CD4-positive, alpha-beta T cell (primary cell): ENCODE measurements at regions of chr1 and their contacts with region 1.

Region 1: DNA sequence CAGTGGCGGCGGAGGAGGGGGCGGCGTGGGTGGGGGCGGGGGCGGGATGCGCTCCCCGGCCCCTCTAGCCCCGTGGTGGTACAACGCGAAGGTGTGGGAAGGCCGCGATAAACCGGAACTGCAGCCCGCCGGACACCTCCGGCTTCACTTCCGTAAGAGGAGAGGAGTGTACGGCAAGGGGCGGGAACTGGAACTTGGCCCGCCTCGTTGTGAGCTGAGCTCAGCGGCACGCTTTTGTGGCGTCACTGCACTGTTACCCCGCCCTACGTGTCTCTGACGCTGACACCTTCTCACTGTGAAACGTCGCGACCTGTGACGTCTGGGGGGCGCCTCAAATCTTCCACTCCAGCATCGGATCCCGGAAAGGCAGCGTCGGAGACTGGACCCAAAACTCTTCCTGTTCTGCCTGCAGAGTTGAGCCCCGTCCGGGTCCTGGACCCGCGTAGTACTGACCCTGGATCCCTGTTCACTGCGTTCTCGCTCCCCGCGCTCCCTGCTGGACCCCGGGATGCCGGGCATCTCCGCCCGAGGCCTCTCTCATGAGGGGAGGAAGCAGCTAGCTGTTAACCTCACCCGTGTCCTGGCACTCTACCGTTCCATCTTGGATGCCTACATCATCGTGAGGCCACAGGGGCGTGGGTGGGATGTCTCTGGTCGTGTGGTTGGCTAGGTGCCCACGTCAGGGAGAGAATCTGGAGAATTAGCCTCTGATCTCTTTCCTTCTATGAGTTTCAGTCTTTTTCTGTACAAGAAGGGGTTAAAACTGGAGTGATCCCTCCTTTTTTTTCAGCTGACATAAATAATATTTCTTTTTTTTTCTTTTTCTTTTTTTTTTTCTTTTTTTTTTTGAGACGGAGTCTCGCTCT is at the start of gene ISG20L2:
- DNase-seq: peak; percentile 80 to 99 (median 90)
- ATAC-seq: peak; percentile 90
- H3K4me3 ChIP-seq: peak within 1 kb of the TSS; percentile 99
- H3K4me3 Mint-ChIP-seq: no peak within 1 kb of the TSS
- H3K27ac ChIP-seq: peak within 1 kb of the TSS; percentile 90 to 98
- H3K27ac Mint-ChIP-seq: peak within 1 kb of the TSS; percentile 98
- H3K4me1 ChIP-seq: peaks cover 48% of the 10 kb centered on the region
- H3K4me1 Mint-ChIP-seq: peaks cover 23% of the 10 kb centered on the region
- H3K27me3 ChIP-seq: no peaks in the 10 kb centered on the region
- H3K27me3 Mint-ChIP-seq: no peaks in the 10 kb centered on the region
- CTCF ChIP-seq: no peak
- total RNA-seq, gene ISG20L2: 44.2 to 50.9 TPM

Region 2: GRCh38 chr1:156659994-156660751 is 68.7 kb before region 1 on chr1:
- CTCF ChIA-PET with region 1: interaction called, 25 read pairs
- POLR2A ChIA-PET with region 1: interaction called, 6 read pairs
- intact Hi-C with region 1: loop called (anchors 1 to 2 kb)
- DNase-seq: peak; percentile 79 to 96 (median 88)
- ATAC-seq: peak; percentile 87
- H3K4me3 ChIP-seq: no peak overlapping the region
- H3K4me3 Mint-ChIP-seq: peak overlapping the region; percentile 54
- H3K27ac ChIP-seq: no peak overlapping the region
- H3K27ac Mint-ChIP-seq: peak overlapping the region; percentile 42
- H3K4me1 ChIP-seq: peaks cover 60% of the 10 kb centered on the region
- H3K4me1 Mint-ChIP-seq: peaks cover 60% of the 10 kb centered on the region
- H3K27me3 ChIP-seq: peaks cover 20 to 22% of the 10 kb centered on the region in 2 experiments
- H3K27me3 Mint-ChIP-seq: peaks cover 30% of the 10 kb centered on the region
- CTCF ChIP-seq: peak; percentile 91

Region 3: DNA sequence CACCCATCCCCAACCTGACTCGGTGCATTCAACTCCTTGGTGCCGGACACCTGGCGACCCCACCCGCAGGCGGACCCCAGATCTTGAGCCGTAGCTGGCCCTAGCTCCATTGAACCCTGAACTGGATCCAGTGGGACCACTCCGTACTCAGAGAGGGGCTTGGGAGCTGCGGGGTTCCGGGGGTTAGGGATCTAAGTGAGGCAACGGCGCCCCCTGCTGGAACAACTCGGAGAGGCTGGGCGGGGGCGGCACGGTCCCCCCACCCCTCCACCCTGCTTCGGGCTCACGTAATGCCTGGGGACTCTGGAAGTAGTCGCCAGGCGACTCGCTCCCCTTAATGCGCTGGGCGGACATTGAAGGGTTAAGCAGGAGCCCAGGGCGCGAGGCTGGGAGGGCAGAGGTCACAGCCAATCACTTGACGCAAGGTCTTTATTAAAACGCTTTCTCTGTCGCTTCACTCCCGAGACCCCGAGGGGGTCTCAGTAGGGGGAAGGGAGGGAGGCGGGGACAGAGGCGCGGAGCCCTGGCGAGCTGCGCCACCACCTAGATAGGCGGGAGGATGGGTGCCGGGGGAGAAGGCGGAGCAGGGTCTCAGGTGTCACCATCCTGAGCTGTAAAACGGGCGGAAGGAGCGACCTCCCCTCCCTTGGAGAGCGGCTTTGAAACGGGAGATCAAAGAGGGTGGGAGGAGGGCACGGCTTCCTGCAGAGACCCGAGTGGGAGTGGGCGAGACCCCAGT is 22.7 kb before region 1 on chr1:
- CTCF ChIA-PET with region 1: interaction called, 43 read pairs
- POLR2A ChIA-PET with region 1: interaction called, 25 read pairs
- intact Hi-C with region 1: loop called (anchors 1 to 2 kb)
- DNase-seq: peak; percentile 60 to 86 (median 68)
- ATAC-seq: peak; percentile 75
- H3K4me3 ChIP-seq: peak overlapping the region; percentile 77
- H3K4me3 Mint-ChIP-seq: peak overlapping the region; percentile 97
- H3K27ac ChIP-seq: peak overlapping the region; percentile 53 to 66
- H3K27ac Mint-ChIP-seq: peak overlapping the region; percentile 77
- H3K4me1 ChIP-seq: peaks cover 35% of the 10 kb centered on the region
- H3K4me1 Mint-ChIP-seq: peaks cover 32% of the 10 kb centered on the region
- H3K27me3 ChIP-seq: peaks cover 22 to 24% of the 10 kb centered on the region in 2 experiments
- H3K27me3 Mint-ChIP-seq: peaks cover 39% of the 10 kb centered on the region
- CTCF ChIP-seq: peak; percentile 91

Region 4: DNA sequence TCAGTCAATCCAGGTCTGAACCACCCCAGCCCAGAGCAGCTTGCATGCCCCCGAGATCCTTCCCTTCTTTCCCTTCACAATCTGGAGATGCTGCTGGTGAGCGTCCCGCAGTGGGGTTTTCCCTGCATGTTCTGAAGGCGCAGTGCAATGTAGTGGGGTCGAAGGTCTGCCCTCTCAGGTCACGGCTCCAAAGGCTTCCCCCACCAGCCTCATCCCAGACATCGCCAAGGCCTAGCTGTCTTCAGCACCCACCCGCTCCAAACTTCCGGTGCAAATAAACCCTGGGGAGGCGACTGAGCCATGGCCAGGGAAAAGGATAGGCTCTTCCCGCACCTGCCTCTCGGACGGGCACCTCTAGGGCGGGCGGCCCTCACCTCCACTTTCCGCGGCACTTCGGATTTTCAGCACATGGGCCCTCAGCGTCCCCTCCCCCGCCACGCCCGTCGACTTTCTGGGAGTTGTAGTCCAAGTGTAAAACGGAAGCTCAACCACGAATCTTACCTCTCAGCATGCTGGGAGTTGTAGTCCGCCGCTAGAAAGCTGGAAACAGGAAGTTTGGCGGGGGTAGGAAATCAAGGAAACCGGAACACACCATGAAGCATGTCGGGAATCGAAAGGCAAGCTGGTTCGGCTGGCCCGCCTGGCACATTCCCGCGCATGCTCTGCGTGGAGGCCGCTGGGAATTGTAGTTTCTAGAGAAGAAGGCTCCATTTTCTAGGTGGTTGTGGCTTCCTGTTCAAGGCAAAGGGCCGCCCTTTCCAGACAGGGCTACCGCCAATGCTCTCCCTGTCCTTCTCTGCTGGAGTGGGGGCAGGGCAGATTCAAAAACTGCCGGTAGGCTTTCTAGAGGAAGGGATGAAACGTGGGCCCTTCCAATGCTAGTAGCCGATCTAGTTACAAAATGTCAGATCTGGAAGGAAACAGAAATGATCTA is 12.1 kb after region 1 on chr1 and contains the start of gene MRPL24:
- CTCF ChIA-PET with region 1: interaction called, 62 read pairs
- POLR2A ChIA-PET with region 1: interaction called, 107 read pairs
- intact Hi-C with region 1: loop called in 1 of 2 experiments (anchors 1 kb)
- DNase-seq: peak; percentile 92 to 100 (median 96)
- ATAC-seq: peak; percentile 89
- H3K4me3 ChIP-seq: peak within 1 kb of the TSS; percentile 74
- H3K4me3 Mint-ChIP-seq: peak within 1 kb of the TSS; percentile 94
- H3K27ac ChIP-seq: peak within 1 kb of the TSS; percentile 82 to 86
- H3K27ac Mint-ChIP-seq: peak within 1 kb of the TSS; percentile 89
- H3K4me1 ChIP-seq: peaks cover 28% of the 10 kb centered on the region
- H3K4me1 Mint-ChIP-seq: peaks cover 40% of the 10 kb centered on the region
- H3K27me3 ChIP-seq: no peaks in the 10 kb centered on the region
- H3K27me3 Mint-ChIP-seq: no peaks in the 10 kb centered on the region
- CTCF ChIP-seq: no peak
- total RNA-seq, gene MRPL24: 11.7 to 11.9 TPM

Region 5: GRCh38 chr1:156767101-156767878 is 38.5 kb after region 1 on chr1 and contains the start of gene PRCC:
- CTCF ChIA-PET with region 1: interaction called, 54 read pairs
- POLR2A ChIA-PET with region 1: interaction called, 36 read pairs
- intact Hi-C with region 1: loop called (anchors 1 to 2 kb)
- DNase-seq: peak; percentile 91 to 100 (median 96)
- ATAC-seq: peak; percentile 88
- H3K4me3 ChIP-seq: peak within 1 kb of the TSS; percentile 87
- H3K4me3 Mint-ChIP-seq: no peak within 1 kb of the TSS
- H3K27ac ChIP-seq: peak within 1 kb of the TSS; percentile 96
- H3K27ac Mint-ChIP-seq: no peak within 1 kb of the TSS
- H3K4me1 ChIP-seq: peaks cover 42% of the 10 kb centered on the region
- H3K4me1 Mint-ChIP-seq: peaks cover 37% of the 10 kb centered on the region
- H3K27me3 ChIP-seq: no peaks in the 10 kb centered on the region
- H3K27me3 Mint-ChIP-seq: no peaks in the 10 kb centered on the region
- CTCF ChIP-seq: no peak
- total RNA-seq, gene PRCC: 49.5 to 50.0 TPM

Region 6: DNA sequence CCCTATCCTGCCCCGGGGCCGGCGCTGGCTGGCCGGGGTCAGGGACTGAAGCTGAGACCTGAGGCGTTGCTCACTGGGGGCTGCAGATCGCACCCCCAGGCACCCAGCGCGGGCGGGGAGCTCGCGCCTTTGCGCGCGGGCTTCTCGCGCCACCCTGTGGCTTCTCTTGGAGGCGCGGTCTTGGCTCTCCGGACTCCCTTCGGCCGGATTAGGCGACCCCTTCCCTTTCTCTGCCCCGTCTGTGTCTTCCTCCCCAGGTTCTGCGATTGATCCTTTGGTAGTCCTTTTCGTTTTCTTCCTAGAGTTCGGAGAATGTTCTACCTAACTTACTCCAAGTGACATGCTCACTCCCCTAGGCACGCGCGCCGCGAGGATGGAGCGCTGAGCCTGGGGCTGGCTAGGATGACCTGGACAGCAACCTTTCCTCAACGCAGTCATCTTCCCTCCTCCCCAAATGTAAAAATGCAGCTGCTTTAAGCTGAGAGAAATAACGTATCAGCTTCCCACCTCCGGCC is 131.3 kb after region 1 on chr1:
- CTCF ChIA-PET with region 1: interaction called, 44 read pairs
- POLR2A ChIA-PET with region 1: interaction called, 8 read pairs
- intact Hi-C with region 1: loop called (anchors 1 to 10 kb)
- DNase-seq: peak; percentile 24 to 77 (median 50)
- ATAC-seq: peak; percentile 54
- H3K4me3 ChIP-seq: peak overlapping the region; percentile 52
- H3K4me3 Mint-ChIP-seq: peak overlapping the region; percentile 81
- H3K27ac ChIP-seq: no peak overlapping the region
- H3K27ac Mint-ChIP-seq: no peak overlapping the region
- H3K4me1 ChIP-seq: peaks cover 29% of the 10 kb centered on the region
- H3K4me1 Mint-ChIP-seq: peaks cover 30% of the 10 kb centered on the region
- H3K27me3 ChIP-seq: peaks cover 53 to 62% of the 10 kb centered on the region in 2 experiments
- H3K27me3 Mint-ChIP-seq: peaks cover 75% of the 10 kb centered on the region
- CTCF ChIP-seq: peak; percentile 87

Region 7: GRCh38 chr1:158075078-158075477 is 1346.2 kb after region 1 on chr1:
- CTCF ChIA-PET with region 1: no interaction called
- POLR2A ChIA-PET with region 1: no interaction called
- intact Hi-C with region 1: no loop called
- DNase-seq: no peak
- ATAC-seq: no peak
- H3K4me3 ChIP-seq: no peak overlapping the region
- H3K4me3 Mint-ChIP-seq: no peak overlapping the region
- H3K27ac ChIP-seq: no peak overlapping the region
- H3K27ac Mint-ChIP-seq: no peak overlapping the region
- H3K4me1 ChIP-seq: no peaks in the 10 kb centered on the region
- H3K4me1 Mint-ChIP-seq: no peaks in the 10 kb centered on the region
- H3K27me3 ChIP-seq: no peaks in the 10 kb centered on the region
- H3K27me3 Mint-ChIP-seq: no peaks in the 10 kb centered on the region
- CTCF ChIP-seq: no peak